ENCODE measurements at regions of chr5 and their contacts with region 1.

Region 1: DNA sequence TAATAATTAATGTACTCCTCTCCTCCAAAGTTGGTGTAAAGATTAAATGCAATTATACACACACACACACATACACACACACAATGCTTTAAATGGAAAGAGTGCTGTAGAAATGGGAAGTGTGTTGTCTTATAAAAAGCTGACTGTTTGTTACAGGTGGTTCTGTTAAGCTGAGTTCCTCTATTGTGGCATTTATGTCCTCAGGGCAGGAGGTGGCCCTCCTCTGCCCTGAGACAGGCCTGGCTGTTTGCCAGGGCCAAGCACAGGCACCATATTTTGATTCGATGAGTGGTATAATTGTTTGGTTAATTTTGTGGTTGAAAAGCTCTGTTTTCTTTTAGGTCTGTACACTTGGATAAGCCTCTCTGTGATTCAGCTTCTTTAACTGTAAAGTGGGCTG is 573.9 kb downstream of the KIF4B start:
- DNase-seq: no peak
- ATAC-seq: no peak
- H3K4me3 ChIP-seq: no peak overlapping the region
- H3K27ac ChIP-seq: no peak overlapping the region
- H3K4me1 ChIP-seq: no peaks in the 10 kb centered on the region
- H3K27me3 ChIP-seq: no peaks in the 10 kb centered on the region

Region 2: GRCh38 chr5:155260798-155261197 is 326.7 kb before region 1 on chr5:
- intact Hi-C with region 1: loop called in 1 of 4 experiments (anchors 10 kb)
- DNase-seq: no peak
- ATAC-seq: no peak
- H3K4me3 ChIP-seq: no peak overlapping the region
- H3K27ac ChIP-seq: no peak overlapping the region
- H3K4me1 ChIP-seq: no peaks in the 10 kb centered on the region
- H3K27me3 ChIP-seq: no peaks in the 10 kb centered on the region

Region 3: DNA sequence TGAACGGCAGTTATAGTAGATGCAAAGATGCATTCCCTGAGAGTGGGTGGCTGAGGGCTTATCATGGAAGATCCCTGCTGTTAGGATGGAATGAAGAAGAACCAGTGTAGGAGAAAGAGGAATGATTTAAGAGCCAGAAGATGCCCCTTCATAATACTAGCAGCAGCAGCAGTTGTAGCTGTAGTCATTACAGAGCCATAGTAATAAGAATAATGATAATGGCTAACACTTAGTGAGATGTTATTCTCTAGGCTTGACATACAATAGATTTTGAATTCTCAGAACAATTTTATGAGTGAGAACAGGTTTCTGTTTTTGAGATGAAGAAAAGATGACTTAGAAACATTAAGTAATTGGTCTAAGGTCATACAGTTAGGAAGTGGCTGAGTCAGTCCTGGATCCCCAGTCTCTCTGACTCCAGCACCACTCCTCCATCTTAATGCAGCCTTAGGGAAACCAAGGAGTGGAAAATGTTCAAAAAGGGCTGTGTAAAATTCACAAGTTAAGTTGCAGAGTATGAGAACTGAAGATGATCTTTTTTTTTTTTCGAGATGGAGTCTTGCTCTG is 280.1 kb after region 1 on chr5:
- intact Hi-C with region 1: no loop called
- DNase-seq: no peak
- ATAC-seq: no peak
- H3K4me3 ChIP-seq: no peak overlapping the region
- H3K27ac ChIP-seq: no peak overlapping the region
- H3K4me1 ChIP-seq: peaks cover 2% of the 10 kb centered on the region
- H3K27me3 ChIP-seq: no peaks in the 10 kb centered on the region

Region 4: GRCh38 chr5:155897761-155898160 is 310.3 kb after region 1 on chr5:
- intact Hi-C with region 1: no loop called
- DNase-seq: no peak
- ATAC-seq: no peak
- H3K4me3 ChIP-seq: no peak overlapping the region
- H3K27ac ChIP-seq: no peak overlapping the region
- H3K4me1 ChIP-seq: peaks cover 2% of the 10 kb centered on the region
- H3K27me3 ChIP-seq: no peaks in the 10 kb centered on the region

Measured in right cardiac atrium (tissue), 5 donors.